Activated T-helper 1 cell treated with anti-CD3 and anti-CD28 coated beads, Interleukin-12 subunit alpha, Interleukin-12 subunit beta, Interleukin-2, Interleukin-4 antibody, amounts not matched to agents 30 ng/mL and 10 ng/mL and 1 ng/mL, durations not matched to agents 14 hours and 24 hours and 36 hours (primary cell): ENCODE measurements at regions of chr12 and their contacts with region 1.

Region 1: DNA sequence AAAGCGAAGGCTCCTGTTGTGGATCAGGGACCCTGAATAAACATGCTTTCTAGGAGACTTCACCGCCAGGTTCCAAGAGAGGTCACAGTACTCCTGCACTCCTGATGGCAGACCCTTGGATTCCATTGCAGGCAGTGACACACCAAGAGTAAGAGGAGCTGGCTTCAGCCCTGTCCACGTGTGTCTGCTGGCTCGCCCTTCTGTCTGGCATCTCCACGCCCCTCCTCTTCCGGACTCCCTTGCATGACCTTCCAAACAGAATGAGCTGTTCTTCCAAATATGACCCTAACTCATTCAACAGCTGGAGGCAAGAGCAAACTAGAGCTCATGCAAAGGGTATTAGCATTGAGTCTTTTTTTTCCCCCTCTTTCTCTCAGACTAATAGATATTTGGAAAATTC is 233.0 kb upstream of the PLEKHG7 start:
- DNase-seq: no peak
- H3K4me3 Mint-ChIP-seq: no peak overlapping the region
- H3K27ac Mint-ChIP-seq: peak overlapping the region; percentile 81
- H3K4me1 Mint-ChIP-seq: peaks cover 30% of the 10 kb centered on the region
- H3K27me3 Mint-ChIP-seq: no peaks in the 10 kb centered on the region

Region 2: DNA sequence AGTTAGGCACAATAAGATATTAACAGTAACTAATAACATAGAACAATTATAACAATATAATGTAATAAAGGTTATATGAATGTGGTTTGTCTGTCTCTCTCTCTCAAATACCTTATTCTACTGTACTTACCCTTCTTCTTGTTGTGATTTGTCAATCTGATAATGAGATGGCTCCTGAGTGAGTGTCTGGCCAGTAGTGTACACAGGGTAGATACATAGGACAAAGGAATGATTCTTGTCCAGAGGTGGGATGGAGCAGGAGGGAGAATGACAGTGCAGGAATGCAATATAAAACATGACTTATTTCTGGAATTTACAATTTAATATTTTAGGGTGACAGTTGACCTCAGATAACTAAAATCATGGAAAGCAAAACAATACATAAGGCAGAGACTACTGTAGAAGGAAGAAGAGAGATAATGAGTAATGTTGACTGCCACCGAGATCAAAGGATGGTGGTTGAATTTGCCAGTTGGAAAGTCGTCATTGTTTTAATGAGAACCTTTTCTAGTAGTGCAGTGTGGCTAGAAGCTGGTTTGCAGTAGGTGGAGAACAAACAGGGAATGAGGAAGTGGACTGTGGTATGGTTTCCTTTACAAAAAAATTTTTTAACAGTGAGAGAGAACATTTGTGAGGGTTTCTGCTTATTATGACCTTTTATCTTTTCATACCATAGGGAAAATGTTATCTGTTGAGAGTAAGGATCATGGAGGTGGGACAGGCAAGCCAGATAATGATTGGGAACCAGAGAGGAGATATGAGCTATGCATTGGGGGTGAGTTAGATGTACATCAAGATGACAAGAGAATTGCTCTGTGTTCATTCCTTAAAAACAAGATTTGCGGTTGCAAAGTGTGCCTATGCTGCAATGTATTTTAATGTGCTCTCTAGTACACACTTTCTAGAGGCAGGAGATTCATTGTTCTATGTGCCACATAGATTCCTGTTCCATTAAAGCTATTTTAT is 782.5 kb before region 1 on chr12:
- intact Hi-C with region 1: loop called (anchors 1 kb)
- DNase-seq: peak; percentile 2
- H3K4me3 Mint-ChIP-seq: peak overlapping the region; percentile 54
- H3K27ac Mint-ChIP-seq: peak overlapping the region; percentile 83
- H3K4me1 Mint-ChIP-seq: peaks cover 22% of the 10 kb centered on the region
- H3K27me3 Mint-ChIP-seq: no peaks in the 10 kb centered on the region

Region 3: GRCh38 chr12:92136965-92137721 is 332.7 kb before region 1 on chr12:
- intact Hi-C with region 1: loop called (anchors 1 kb)
- DNase-seq: no peak
- H3K4me3 Mint-ChIP-seq: peak overlapping the region; percentile 94
- H3K27ac Mint-ChIP-seq: peak overlapping the region; percentile 90
- H3K4me1 Mint-ChIP-seq: peaks cover 89% of the 10 kb centered on the region
- H3K27me3 Mint-ChIP-seq: no peaks in the 10 kb centered on the region

Region 4: GRCh38 chr12:92218394-92219077 is 251.3 kb before region 1 on chr12:
- intact Hi-C with region 1: loop called (anchors 2 kb)
- DNase-seq: no peak
- H3K4me3 Mint-ChIP-seq: peak overlapping the region; percentile 17
- H3K27ac Mint-ChIP-seq: peak overlapping the region; percentile 59
- H3K4me1 Mint-ChIP-seq: peaks cover 21% of the 10 kb centered on the region
- H3K27me3 Mint-ChIP-seq: no peaks in the 10 kb centered on the region

Region 5: DNA sequence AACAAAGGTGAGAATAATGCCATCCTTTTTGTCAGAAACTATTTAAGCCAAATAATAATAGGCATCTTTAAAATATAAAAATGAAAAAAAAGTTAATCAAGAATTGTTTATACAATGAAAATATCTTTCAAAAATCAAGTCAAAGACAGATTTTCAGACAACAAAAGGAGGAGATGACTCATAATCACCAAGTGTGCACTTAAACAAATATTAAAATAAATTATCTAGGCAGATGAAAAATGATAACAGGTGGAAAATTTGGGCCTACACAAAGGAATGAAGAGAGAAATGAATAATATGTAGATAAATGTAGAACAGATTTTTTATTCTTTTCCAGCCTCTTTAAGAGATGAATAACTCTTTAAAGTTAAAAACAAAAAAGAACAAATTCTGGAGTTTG is 17.1 kb before region 1 on chr12:
- intact Hi-C with region 1: no loop called
- DNase-seq: no peak
- H3K4me3 Mint-ChIP-seq: no peak overlapping the region
- H3K27ac Mint-ChIP-seq: no peak overlapping the region
- H3K4me1 Mint-ChIP-seq: peaks cover 8% of the 10 kb centered on the region
- H3K27me3 Mint-ChIP-seq: no peaks in the 10 kb centered on the region

Region 6: DNA sequence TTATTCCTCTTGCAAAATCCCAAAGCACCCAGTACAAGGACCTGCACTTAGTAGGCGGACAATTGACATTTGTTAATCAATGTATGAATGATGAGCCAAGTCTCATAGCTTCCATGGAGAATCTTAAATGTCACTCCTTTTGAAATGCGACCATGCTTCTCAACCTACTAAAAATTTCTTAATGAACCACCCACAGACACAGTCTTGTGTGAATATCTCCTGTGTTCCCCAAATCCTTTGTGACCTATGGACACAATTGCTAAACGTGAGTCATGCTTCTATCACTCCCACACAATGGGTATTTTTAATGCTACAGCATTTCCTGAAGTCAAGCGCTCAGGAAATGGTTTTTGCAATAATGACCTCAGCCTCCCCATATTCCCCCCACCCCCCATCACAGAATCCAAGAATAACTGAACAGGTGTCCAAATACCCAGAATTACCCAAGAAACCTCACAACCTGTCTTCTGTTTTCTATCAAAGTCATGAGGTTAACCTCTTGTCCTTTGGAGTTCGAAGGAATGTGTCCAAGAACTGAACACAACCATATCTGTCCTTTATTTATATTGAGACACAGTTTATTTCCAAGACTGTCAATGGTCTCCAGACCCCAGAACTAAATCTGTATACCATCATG is 69.4 kb after region 1 on chr12:
- intact Hi-C with region 1: loop called (anchors 1 kb)
- DNase-seq: no peak
- H3K4me3 Mint-ChIP-seq: peak overlapping the region; percentile 74
- H3K27ac Mint-ChIP-seq: peak overlapping the region; percentile 97
- H3K4me1 Mint-ChIP-seq: peaks cover 81% of the 10 kb centered on the region
- H3K27me3 Mint-ChIP-seq: no peaks in the 10 kb centered on the region

Region 7: GRCh38 chr12:92551853-92552397 is 82.1 kb after region 1 on chr12:
- intact Hi-C with region 1: loop called (anchors 1 kb)
- DNase-seq: no peak
- H3K4me3 Mint-ChIP-seq: no peak overlapping the region
- H3K27ac Mint-ChIP-seq: no peak overlapping the region
- H3K4me1 Mint-ChIP-seq: peaks cover 31% of the 10 kb centered on the region
- H3K27me3 Mint-ChIP-seq: no peaks in the 10 kb centered on the region

Region 8: GRCh38 chr12:92593734-92594402 is 124.0 kb after region 1 on chr12:
- intact Hi-C with region 1: loop called (anchors 1 kb)
- DNase-seq: peak; percentile 79
- H3K4me3 Mint-ChIP-seq: peak overlapping the region; percentile 72
- H3K27ac Mint-ChIP-seq: peak overlapping the region; percentile 99
- H3K4me1 Mint-ChIP-seq: peaks cover 63% of the 10 kb centered on the region
- H3K27me3 Mint-ChIP-seq: no peaks in the 10 kb centered on the region